ENCODE measurements at regions of chr11 and their contacts with region 1.

Region 1: GRCh38 chr11:116762132-116762531 is 10.7 kb downstream of the BUD13 start:
- DNase-seq: no peak
- ATAC-seq: no peak
- H3K4me3 ChIP-seq: no peak overlapping the region
- H3K27ac ChIP-seq: no peak overlapping the region
- H3K4me1 ChIP-seq: no peaks in the 10 kb centered on the region
- H3K27me3 ChIP-seq: no peaks in the 10 kb centered on the region
- CTCF ChIP-seq: no peak
- POLR2A ChIP-seq: no peak

Region 2: GRCh38 chr11:117217141-117218084 is 455.3 kb after region 1 on chr11:
- intact Hi-C with region 1: loop called (anchors 10 kb)
- DNase-seq: no peak
- ATAC-seq: peak; percentile 16
- H3K4me3 ChIP-seq: no peak overlapping the region
- H3K27ac ChIP-seq: peak overlapping the region in 2 of 4 donors; percentile 24 to 50
- H3K4me1 ChIP-seq: peaks cover 37% of the 10 kb centered on the region
- H3K27me3 ChIP-seq: no peaks in the 10 kb centered on the region
- CTCF ChIP-seq: no peak
- POLR2A ChIP-seq: no peak